Ascending aorta (tissue), 2 donors: ENCODE measurements at regions of chr17 and their contacts with region 1.

Region 1: DNA sequence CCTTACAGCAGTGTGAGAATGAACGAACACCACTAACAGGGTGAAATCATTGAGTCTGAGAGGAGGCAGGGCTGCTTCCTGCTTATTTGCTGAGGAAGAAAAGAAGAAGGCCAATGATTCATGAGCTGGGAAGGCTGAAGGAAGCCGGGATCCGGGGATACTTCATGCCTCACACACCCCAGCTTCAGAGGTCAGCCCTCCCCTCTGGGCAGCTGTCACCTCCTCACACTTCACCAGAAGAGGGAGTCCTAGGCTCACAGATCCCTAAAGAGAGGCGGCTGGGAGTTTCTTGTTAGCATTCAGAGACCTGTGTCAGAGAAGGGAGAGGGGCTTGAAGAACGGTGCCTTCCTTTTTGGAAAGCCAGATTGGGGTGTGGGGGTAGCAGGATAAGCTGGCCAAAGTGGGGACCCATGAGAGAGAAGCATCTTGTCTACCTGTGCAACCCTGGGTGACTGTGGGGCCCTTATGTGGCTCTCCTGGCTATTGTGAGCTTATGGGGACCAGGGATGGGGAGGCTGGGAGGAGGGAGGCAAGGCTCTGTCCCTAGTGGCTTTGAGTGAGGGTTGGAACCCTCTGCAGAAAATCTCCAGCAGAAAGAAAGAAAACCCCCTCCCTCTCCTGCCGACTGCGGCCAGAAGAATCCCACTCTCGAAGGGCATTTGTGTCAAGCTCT is 94.6 kb downstream of the RGS9 start:
- DNase-seq: peak in 1 of 2 donors; percentile 70
- H3K4me3 ChIP-seq: no peak overlapping the region
- H3K27ac ChIP-seq: no peak overlapping the region
- H3K4me1 ChIP-seq: no peaks in the 10 kb centered on the region
- H3K27me3 ChIP-seq: no peaks in the 10 kb centered on the region
- CTCF ChIP-seq: peak; percentile 59 to 74 (median 59)

Region 2: DNA sequence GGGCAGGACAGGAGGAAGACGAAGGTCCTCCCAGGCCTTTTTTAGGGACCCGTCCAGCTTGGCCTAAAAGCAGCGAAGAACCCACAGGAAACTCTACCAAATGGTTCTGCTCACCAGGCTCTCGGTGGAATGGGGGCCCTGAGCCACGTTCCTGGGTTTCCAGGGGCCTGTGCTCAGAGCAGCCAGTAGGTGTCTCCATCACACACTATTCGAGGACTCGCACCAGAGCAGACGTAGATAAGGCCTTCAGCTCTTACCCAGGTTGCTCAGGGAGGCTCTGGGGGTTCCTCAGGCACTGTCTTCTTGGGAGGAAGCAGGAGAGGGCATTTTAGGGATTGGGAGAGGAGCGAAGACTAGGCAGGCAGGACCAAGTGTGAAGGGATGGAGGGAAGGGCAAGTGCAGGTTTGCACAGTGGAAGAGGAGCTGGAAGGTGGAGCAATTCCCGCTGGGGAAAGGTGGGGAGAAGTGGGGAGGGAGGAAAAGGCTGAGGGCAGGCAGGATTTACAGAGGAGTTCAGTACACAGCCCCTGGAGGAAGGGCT is 62.5 kb after region 1 on chr17:
- intact Hi-C with region 1: loop called (anchors 5 kb)
- DNase-seq: peak in 1 of 2 donors; percentile 71
- H3K4me3 ChIP-seq: no peak overlapping the region
- H3K27ac ChIP-seq: no peak overlapping the region
- H3K4me1 ChIP-seq: peaks cover 0 to 3% of the 10 kb centered on the region in 2 donors
- H3K27me3 ChIP-seq: no peaks in the 10 kb centered on the region
- CTCF ChIP-seq: peak; percentile 64 to 84 (median 69)